ENCODE measurements at regions of chr11 and their contacts with region 1.

Region 1: GRCh38 chr11:58006940-58007339 is 16.7 kb upstream of the OR9Q1 start:
- DNase-seq: peak; percentile 76
- H3K4me3 ChIP-seq: no peak overlapping the region
- H3K27ac ChIP-seq: peak overlapping the region; percentile 33
- H3K4me1 ChIP-seq: peaks cover 48% of the 10 kb centered on the region
- H3K27me3 ChIP-seq: no peaks in the 10 kb centered on the region
- CTCF ChIP-seq: no peak
- POLR2A ChIP-seq: no peak

Region 2: DNA sequence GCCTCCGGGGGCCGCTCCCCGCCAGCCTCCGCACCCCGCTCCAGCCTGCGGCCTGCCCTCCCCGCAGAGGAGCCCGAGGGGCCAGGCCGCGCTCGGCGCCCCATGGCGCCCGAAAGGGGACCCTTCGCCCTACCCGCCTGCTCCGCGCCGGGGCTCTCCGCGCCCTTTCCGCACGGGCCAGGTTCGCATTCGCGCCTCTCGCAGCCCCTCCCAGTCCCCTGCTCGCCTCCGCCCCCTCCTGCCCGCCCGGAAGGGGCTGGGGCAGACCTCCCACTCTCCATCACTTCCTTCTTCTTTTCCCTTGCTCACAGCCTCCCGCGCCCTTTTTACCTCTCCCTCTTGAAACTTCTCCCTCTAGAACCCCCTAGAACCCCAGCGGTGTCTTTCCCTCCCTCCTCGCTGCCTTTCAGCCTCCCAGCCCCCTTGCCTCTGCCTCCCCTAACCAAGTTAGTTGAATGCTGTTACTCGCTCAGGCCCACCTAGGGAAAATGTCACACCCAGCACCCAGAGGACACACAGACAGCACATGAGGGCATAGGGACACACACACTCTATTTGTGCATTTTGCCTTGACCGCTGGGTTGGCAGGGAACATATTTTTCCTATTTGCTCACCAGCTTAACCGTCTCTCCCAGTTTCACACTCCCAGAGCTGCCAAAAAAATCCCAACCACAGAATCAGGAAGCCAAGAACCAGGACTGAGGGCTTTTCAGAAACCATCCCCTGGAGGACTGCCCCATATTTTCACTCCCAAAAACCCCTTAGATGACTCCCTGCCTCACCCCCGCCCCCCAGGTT is 579.8 kb before region 1 on chr11 and contains the start of gene SLC43A3:
- CTCF ChIA-PET with region 1: no interaction called
- POLR2A ChIA-PET with region 1: no interaction called
- dilution Hi-C with region 1: no loop called
- intact Hi-C with region 1: loop called (anchors 10 kb)
- DNase-seq: peak; percentile 38
- H3K4me3 ChIP-seq: peak within 1 kb of the TSS; percentile 47 to 68 (median 59)
- H3K27ac ChIP-seq: peak within 1 kb of the TSS; percentile 81
- H3K4me1 ChIP-seq: peaks cover 33% of the 10 kb centered on the region
- H3K27me3 ChIP-seq: peaks cover 4 to 5% of the 10 kb centered on the region in 2 experiments
- CTCF ChIP-seq: no peak
- POLR2A ChIP-seq: peak; percentile 80
- total RNA-seq, gene SLC43A3: 68.9 and 89.4 TPM in 2 replicates

Region 3: GRCh38 chr11:57712256-57713150 is 294.4 kb before region 1 on chr11 and contains the start of gene TMX2:
- CTCF ChIA-PET with region 1: no interaction called
- POLR2A ChIA-PET with region 1: no interaction called
- dilution Hi-C with region 1: no loop called
- intact Hi-C with region 1: loop called (anchors 2 kb)
- DNase-seq: peak; percentile 99
- H3K4me3 ChIP-seq: peak within 1 kb of the TSS; percentile 64 to 100 (median 78)
- H3K27ac ChIP-seq: peak within 1 kb of the TSS; percentile 67
- H3K4me1 ChIP-seq: peaks cover 18% of the 10 kb centered on the region
- H3K27me3 ChIP-seq: no peaks in the 10 kb centered on the region
- CTCF ChIP-seq: no peak
- POLR2A ChIP-seq: no peak
- total RNA-seq, gene TMX2: 66.3 and 67.7 TPM in 2 replicates

Region 4: DNA sequence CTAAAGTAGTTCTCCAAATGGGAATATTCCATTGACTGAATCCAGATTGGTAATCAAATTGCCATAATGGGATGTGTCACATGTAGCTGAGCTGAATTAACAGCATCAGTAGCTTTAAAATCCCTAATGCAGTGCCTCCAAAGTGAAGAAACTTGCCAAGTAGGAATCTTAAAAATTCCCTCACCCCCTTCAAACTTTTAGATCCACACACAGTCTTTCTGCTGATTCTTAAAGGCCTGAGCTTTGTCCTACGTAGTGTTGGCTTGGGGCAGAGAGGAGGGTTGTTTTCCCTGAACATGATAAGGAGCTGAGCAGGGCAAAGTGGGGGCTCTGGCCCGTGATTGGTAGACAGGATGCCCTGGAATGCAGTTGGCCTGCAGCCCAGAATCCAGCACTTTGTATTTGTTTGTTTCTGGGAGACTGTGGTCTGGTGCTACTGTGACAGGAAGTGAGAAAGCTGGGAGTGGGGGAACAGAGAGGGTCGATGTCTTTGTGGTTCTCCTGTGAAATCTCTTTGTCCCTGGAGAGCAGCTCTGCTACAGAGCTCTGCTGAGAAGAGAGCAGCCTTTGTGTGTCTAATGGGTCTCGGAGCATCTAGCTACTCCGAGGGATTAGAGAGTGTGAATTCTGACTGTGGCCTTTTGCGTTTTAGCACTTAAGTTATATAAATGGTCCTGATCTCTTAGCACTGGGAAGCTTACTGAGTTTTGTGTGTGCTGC is 228.5 kb before region 1 on chr11:
- CTCF ChIA-PET with region 1: no interaction called
- POLR2A ChIA-PET with region 1: no interaction called
- dilution Hi-C with region 1: no loop called
- intact Hi-C with region 1: loop called (anchors 2 kb)
- DNase-seq: peak; percentile 100
- H3K4me3 ChIP-seq: peak overlapping the region in 1 of 3 experiments; percentile 56
- H3K27ac ChIP-seq: peak overlapping the region; percentile 91
- H3K4me1 ChIP-seq: peaks cover 81% of the 10 kb centered on the region
- H3K27me3 ChIP-seq: no peaks in the 10 kb centered on the region
- CTCF ChIP-seq: no peak
- POLR2A ChIP-seq: peak; percentile 93

Region 5: DNA sequence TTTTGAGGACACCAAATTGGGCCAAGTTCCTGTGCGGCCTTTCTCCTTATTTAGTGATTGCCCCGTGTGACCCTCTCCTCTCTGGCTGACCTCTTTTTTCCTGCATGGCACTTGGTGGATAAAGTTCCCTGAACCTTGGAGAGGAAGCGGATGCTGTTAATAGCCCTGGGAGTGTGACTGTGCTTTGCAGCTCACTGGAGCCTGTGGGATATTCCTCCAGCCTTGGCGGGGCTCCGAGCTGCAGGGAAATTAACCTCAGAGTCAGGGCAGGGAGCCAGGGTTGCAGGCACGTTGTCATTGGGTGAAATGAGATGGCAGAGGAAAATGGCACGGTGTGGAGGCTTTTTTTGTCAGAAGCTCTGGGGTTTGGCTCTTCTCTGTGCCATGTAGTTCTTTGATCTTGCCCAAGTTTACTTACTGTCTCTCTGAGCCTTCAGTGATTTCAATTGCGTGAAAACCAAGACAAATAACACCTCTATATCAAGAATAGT is 17.7 kb after region 1 on chr11:
- CTCF ChIA-PET with region 1: interaction called, 3 read pairs
- POLR2A ChIA-PET with region 1: no interaction called
- dilution Hi-C with region 1: no loop called
- intact Hi-C with region 1: loop called (anchors 1 kb)
- DNase-seq: peak; percentile 91
- H3K4me3 ChIP-seq: no peak overlapping the region
- H3K27ac ChIP-seq: peak overlapping the region; percentile 32
- H3K4me1 ChIP-seq: peaks cover 13% of the 10 kb centered on the region
- H3K27me3 ChIP-seq: no peaks in the 10 kb centered on the region
- CTCF ChIP-seq: no peak
- POLR2A ChIP-seq: no peak

Region 6: DNA sequence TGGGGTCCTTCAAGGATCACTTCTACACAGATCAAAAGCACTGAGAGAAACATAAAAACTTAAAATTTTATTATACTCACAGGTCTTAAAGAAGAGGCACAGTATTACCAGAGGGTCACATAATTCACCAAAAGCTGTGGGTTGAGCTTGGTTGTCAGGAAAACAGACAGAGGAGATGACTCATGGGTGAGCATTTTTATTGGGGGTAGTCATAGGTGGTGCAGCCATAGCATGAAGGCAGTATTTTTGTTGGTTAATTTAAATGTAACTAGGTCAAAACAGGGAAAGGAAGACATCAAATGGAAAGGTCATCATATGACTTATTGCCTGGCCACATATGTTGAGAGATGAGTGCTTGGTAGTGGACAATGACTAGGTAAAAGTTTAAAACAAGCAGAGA is 327.8 kb after region 1 on chr11:
- CTCF ChIA-PET with region 1: no interaction called
- POLR2A ChIA-PET with region 1: no interaction called
- dilution Hi-C with region 1: no loop called
- intact Hi-C with region 1: loop called (anchors 1 kb)
- DNase-seq: peak; percentile 87
- H3K4me3 ChIP-seq: peak overlapping the region in 1 of 3 experiments; percentile 27
- H3K27ac ChIP-seq: peak overlapping the region; percentile 87
- H3K4me1 ChIP-seq: peaks cover 16% of the 10 kb centered on the region
- H3K27me3 ChIP-seq: no peaks in the 10 kb centered on the region
- CTCF ChIP-seq: no peak
- POLR2A ChIP-seq: no peak

Region 7: DNA sequence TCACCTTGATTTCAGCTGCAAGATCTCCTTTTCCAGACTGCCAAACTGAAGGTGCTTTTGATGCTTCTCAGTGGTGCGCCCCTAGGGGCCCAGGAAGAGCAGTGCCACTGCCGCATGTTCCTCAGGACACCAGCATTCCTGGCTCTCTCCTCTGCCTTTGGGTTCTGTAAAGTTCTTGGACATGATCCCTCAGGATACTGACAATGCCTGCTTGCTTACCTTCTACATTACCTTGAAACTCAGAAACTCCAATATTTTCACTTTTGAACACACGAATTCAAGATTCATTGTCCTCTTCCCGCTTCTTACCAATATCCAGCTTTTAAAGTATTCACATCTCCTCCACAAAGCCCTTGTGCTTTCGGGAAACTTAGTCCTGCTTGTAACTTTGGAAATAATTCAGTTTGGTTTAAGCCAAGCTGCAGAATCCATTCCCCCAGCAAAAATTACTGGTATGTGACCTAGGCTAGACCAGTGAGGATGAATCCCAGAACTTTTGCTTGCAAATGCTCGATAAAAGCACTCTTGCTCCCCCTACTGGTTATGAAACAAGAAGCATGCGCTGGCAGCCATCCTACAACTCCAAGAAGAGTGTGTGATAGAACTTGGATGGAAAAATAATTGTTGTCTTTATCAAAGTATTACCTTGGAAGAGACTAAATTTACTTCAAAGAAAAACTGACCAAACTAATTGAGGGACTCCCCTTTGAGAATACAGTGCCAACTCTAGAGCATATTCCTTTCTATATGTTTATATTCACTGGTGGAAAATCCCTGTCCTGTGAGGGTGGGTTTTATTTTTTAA is 517.5 kb after region 1 on chr11:
- CTCF ChIA-PET with region 1: no interaction called
- POLR2A ChIA-PET with region 1: no interaction called
- dilution Hi-C with region 1: no loop called
- intact Hi-C with region 1: loop called (anchors 5 kb)
- DNase-seq: peak; percentile 85
- H3K4me3 ChIP-seq: no peak overlapping the region
- H3K27ac ChIP-seq: no peak overlapping the region
- H3K4me1 ChIP-seq: no peaks in the 10 kb centered on the region
- H3K27me3 ChIP-seq: peaks cover 11 to 12% of the 10 kb centered on the region in 2 experiments
- CTCF ChIP-seq: peak; percentile 62 to 84
- POLR2A ChIP-seq: no peak